GM10248 (cell line): ENCODE measurements at regions of chr2 and their contacts with region 1.

Region 1: DNA sequence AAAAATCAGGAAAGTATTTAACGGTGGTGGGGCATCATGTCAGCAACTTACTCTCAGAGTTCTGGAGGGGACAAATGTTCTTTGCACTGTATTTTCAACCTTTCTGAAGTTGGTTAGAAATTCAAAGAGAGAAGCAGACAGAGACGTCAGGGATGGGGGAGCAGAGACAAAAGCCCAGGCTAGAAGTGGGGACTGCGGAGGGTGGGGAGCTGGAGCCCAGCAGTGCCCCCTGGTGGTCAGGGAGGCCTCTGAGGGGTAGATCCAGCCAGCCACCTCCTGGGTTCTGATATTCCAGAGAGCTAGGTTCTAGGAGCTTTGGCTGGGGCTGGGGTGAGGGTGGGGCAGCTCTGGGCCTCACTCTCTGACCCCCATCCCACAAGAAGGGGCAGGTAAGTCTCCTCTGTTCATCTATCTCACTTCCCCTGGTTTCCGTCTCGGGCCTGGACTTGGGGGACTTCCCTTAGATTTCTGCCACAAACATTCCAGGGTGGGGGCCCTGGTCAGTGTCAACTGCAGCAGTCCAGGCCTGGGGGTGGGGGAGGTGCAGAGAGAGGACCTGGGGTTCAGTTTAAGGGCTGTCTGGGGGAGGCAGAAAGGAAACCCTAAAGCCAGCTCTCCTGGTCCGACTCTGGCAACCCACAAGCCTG is 8.9 kb downstream of the TNS1 start:
- DNase-seq: peak; percentile 80
- CTCF ChIP-seq: peak; percentile 78

Region 2: DNA sequence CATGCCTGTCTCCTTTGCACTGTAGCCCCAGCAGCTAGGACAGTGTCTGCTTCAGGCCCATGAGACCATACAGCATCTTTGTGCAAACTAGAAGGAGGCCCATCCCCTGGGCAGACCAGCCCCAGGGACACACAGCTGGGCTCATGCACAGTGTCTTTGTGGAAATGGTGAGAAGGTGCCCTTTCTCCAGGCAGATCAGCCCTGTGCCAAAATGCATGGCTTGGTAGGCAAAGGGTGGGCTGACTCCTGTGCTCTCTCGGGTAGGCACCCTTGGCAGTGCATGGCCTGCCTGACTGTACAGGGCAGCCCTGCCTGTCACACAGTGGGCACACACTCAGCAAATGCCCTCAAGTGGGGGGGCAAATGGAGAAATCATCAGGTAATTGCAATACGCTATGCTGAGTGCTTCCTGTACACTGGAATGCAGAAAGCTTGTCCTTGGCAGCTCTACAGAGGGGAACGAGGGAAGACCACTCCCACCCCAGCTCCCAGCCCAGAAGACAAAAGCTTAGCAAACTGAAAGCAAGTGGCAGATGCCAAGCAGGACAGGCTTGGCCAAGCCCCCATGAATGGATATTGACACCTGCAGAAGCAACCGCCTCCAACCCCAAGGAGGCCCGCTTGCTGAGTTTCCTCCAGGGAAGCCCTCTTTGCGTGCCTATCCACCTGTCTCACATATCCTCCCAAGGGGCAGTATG is 12.7 kb before region 1 on chr2:
- CTCF ChIA-PET with region 1: interaction called, 29 read pairs
- POLR2A ChIA-PET with region 1: no interaction called
- DNase-seq: no peak
- CTCF ChIP-seq: no peak

Region 3: DNA sequence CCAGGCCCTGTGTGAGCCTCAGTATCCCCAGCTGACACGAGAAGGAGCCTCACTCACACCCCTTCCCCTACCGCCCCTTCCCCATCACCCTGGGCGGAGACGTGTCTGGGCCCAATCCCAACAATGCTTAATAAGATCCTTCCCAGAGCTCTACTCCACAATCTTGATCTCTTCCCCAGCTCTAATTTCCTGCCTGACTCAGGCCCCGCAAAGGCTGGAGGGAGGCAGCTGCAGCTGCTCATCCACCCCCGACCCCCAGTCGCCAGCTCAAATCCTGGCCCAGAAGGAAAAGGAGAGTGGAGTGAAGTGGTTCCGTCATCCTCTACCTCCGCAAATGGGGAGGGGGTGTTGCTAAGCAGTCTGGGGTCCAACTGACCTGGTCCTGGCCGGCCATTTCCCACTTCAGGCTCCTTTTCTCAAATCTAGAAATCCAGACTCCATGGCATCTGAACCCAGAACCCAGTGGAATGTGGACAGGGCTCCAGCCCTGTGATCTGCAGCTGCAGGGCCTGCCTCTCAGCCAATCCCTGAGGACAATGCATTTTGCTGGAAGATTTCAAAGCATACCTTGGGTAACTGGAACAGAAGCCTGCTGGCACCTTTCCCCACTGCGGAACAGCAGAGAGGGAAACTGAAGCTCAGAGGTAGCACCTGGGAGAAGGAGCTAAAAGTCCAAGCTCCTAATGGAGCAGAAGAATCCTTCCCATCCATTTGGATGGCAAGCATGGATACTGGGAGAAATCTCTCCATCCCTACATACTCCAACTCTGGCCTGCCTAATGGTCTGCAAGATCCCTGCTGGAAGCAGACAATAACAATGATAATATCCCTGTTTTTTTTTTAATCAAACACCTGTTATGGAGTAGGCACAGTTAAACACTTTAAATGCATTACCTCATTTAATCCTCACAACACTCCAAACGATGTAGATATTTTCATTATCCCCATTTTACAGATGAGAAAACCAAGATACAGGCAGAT is 14.4 kb after region 1 on chr2:
- CTCF ChIA-PET with region 1: interaction called, 11 read pairs
- POLR2A ChIA-PET with region 1: no interaction called
- DNase-seq: no peak
- CTCF ChIP-seq: no peak

Region 4: GRCh38 chr2:218021536-218022071 is 27.7 kb after region 1 on chr2:
- CTCF ChIA-PET with region 1: no interaction called
- POLR2A ChIA-PET with region 1: no interaction called
- DNase-seq: no peak
- CTCF ChIP-seq: no peak

Region 5: GRCh38 chr2:219612577-219613286 is 1618.8 kb after region 1 on chr2:
- CTCF ChIA-PET with region 1: no interaction called
- POLR2A ChIA-PET with region 1: no interaction called
- DNase-seq: no peak
- CTCF ChIP-seq: no peak